GM18951 (cell line): ENCODE measurements at regions of chr9 and their contacts with region 1.

Region 1: DNA sequence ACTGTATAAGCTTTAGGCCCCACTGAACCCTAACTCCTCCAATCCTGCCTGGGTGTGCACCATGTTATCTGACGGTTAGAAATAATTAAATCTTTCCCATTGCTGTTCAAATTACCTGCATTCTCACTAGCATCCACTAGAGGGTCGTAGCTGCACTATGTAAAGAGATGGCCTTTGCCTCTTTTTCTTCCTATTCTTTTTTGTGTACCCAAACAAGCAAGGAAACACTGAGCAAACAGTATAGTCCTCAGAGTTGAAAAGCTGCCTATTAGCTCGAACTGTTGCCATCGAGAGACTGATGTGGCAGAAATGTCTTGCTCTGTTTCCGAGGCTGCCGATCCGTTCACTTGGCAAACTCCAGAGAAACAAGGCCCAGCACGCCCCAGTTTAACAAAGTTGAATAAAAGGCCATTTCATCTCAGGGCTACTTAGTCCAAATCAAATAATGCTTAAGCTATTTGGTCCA is 163.8 kb upstream of the TRPM3 start:
- POLR2A ChIP-seq: no peak

Region 2: DNA sequence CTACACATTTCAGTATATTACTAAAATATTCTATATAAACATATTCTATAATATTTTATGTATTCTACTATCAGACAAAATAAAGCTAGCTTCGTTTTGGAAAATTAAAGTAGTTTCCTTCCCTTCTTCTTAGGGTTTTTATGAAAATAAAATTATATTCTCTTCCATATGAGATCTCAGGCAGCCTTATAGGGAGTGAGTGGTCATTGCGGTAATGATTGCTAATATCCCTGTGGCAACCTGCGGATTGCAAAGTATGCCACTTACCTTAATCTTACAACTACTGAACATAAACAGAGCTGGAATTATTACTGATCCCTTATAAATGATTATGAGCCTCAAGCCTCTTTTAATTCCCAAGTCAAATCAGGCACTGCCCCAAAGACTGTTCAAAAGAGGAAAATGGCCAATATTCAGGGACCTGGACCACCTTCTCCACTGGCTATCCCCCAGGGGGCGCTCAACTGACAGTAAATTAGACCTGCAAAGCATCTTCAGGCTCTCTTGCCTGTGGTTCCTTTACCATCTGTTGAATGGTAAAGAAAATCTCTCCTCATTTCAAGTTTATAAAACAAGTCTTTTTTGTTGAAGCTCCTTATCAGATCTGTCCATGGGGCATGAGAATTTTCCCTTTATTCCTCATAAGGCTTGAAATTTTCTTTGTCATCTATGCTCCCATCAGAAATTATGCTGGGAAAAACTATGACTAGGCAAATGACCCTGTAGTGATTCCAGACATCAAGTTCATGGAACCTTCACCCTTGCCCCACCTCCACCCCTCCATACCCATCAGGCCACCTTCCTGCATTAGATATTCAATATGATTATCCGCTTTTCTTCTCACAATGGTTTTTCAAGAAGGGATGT is 319.2 kb after region 1 on chr9:
- in situ Hi-C with region 1: loop called (anchors 25 kb)
- POLR2A ChIP-seq: no peak

Region 3: DNA sequence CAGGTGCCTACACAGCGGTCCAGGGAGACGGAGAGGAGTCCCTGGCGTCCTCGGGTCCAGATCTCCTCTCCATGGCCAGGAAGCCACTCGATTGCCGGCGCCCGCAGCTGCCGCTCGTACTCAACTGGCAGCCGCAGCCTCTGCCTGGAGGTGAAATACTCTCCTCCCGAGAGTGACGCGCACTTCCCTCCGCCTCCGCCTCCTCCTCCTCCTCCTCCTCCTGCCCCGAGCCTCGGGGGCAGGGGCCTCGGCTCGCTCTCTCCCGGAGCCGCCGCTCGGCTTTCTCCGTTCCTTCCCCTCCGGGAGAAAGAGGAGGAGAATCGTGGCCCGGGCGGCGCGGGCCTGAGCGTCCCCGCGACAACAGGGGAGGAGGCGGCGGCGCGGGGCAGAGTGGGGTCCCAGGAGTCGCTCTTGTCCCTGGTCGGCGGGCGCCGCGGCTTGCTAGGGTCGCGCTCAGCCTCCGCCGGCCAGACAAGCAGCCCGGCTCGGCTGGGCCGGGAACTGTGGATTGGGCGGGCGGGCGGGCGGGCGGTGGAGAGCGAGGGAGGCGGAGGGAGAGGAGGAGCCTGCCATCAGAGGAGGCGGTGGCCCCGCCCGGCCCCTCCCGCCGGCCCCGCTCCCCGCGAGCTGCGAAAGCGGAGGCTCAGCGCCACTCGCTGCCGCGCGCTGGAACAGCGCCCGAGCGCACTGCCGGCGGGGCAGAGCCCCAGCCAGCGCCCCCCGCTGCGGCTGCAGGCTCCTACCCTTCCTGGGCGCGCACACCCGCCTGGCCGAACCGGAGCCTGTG is 483.4 kb after region 1 on chr9 and contains the start of gene CEMIP2:
- in situ Hi-C with region 1: loop called (anchors 25 kb)
- POLR2A ChIP-seq: peak; percentile 90